Ovary (tissue), 10 donors: ENCODE measurements at regions of chr19 and their contacts with region 1.

Region 1: DNA sequence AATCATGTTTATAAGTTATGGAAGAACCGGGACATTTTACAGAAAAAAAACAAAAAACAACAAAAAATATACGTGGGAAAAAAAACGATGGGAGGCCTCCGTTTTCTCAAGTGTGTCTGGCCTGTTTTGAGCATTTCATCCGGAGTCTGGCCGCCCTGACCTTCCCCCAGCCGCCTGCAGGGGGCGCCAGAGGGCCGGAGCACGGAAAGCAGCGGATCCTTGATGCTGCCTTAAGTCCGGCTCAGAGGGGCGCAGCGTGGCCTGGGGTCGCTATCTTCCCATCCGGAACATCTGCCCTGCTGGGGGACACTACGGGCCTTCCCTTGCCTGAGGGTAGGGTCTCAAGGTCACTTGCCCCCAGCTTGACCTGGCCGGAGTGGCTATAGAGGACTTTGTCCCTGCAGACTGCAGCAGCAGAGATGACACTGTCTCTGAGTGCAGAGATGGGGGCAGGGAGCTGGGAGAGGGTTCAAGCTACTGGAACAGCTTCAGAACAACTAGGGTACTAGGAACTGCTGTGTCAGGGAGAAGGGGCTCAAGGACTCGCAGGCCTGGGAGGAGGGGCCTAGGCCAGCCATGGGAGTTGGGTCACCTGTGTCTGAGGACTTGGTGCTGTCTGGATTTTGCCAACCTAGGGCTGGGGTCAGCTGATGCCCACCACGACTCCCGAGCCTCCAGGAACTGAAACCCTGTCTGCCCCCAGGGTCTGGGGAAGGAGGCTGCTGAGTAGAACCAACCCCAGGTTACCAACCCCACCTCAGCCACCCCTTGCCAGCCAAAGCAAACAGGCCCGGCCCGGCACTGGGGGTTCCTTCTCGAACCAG is 1.8 kb upstream of the APOE start:
- DNase-seq: peak; percentile 68 to 92 (median 81)
- H3K4me3 ChIP-seq: no peak overlapping the region
- H3K27ac ChIP-seq: no peak overlapping the region
- H3K4me1 ChIP-seq: peaks cover 7% of the 10 kb centered on the region
- H3K27me3 ChIP-seq: no peaks in the 10 kb centered on the region
- CTCF ChIP-seq: peak; percentile 97 to 98 (median 98)
- EP300 ChIP-seq: no peak
- POLR2A ChIP-seq: no peak

Region 2: DNA sequence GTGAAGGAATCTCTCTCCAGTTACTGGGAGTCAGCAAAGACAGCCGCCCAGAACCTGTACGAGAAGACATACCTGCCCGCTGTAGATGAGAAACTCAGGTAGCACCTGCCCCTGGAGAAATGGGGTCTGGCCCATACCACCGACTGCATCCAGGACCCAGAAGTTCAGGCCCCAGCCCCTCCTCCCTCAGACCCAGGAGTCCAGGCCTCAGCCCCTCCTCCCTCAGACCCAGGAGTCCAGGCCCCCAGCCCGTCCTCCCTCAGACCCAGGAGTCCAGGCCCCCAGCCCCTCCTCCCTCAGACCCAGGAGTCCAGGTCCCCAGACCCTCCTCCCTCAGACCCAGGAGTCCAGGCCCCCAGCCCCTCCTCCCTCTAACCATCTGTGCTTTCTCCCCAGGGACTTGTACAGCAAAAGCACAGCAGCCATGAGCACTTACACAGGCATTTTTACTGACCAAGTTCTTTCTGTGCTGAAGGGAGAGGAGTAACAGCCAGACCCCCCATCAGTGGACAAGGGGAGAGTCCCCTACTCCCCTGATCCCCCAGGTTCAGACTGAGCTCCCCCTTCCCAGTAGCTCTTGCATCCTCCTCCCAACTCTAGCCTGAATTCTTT is 45.1 kb after region 1 on chr19:
- intact Hi-C with region 1: loop called (anchors 2 to 5 kb)
- DNase-seq: no peak
- H3K4me3 ChIP-seq: no peak overlapping the region
- H3K27ac ChIP-seq: no peak overlapping the region
- H3K4me1 ChIP-seq: peaks cover 2% of the 10 kb centered on the region
- H3K27me3 ChIP-seq: no peaks in the 10 kb centered on the region
- CTCF ChIP-seq: no peak
- EP300 ChIP-seq: no peak
- POLR2A ChIP-seq: no peak

Region 3: DNA sequence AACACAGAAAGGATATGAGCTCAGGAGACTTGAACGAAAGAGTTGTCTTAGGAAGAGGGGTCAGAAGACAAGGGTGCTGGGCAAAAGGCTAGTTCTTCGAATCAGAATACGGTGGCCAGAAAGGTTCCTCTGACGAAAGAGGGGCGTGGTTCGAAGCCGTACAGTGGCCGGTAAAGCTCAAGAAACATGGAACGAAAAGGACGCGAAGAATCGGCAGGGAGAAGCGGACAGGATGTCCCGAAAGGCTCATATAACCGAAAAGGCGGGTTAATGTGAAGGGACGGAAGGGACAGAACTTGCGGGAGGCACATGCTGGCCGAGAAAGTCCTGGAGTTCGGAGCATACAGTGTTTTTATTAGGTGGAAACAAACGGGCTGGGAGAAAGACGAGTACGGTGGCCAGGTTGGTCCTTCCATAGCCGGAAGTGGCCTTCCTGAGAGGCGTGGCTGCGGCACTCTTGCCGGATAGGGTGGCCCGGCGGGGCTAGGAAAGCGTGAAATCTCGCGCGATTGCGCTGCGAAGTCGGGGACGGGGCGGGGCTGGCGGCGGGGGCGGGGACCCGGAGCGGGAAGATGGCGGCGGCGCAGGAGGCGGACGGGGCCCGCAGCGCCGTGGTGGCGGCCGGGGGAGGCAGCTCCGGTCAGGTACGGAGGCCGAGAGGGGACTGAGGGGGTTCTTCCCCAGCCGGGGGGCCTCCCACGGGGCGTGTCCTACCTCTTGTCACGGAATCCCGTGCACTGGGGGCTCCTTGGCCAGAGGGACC is 51.2 kb after region 1 on chr19 and contains the start of gene CLPTM1:
- intact Hi-C with region 1: loop called in 3 of 4 experiments (anchors 2 to 5 kb)
- DNase-seq: peak; percentile 96 to 98 (median 97)
- H3K4me3 ChIP-seq: peak within 1 kb of the TSS; percentile 65
- H3K27ac ChIP-seq: peak within 1 kb of the TSS; percentile 81 to 85
- H3K4me1 ChIP-seq: peaks cover 13% of the 10 kb centered on the region
- H3K27me3 ChIP-seq: no peaks in the 10 kb centered on the region
- CTCF ChIP-seq: peak in 2 of 3 donors; percentile 47 to 57
- EP300 ChIP-seq: no peak
- POLR2A ChIP-seq: peak; percentile 77
- total RNA-seq, gene CLPTM1: 36.4 to 103 (median 82.0) TPM

Region 4: GRCh38 chr19:44972802-44973201 is 69.0 kb after region 1 on chr19:
- intact Hi-C with region 1: no loop called
- DNase-seq: no peak
- H3K4me3 ChIP-seq: no peak overlapping the region
- H3K27ac ChIP-seq: no peak overlapping the region
- H3K4me1 ChIP-seq: no peaks in the 10 kb centered on the region
- H3K27me3 ChIP-seq: no peaks in the 10 kb centered on the region
- CTCF ChIP-seq: no peak
- EP300 ChIP-seq: no peak
- POLR2A ChIP-seq: no peak

Region 5: GRCh38 chr19:45059278-45059965 is 155.6 kb after region 1 on chr19:
- intact Hi-C with region 1: loop called in 2 of 4 experiments (anchors 5 to 10 kb)
- DNase-seq: peak; percentile 33 to 72 (median 64)
- H3K4me3 ChIP-seq: no peak overlapping the region
- H3K27ac ChIP-seq: no peak overlapping the region
- H3K4me1 ChIP-seq: no peaks in the 10 kb centered on the region
- H3K27me3 ChIP-seq: no peaks in the 10 kb centered on the region
- CTCF ChIP-seq: peak in 2 of 3 donors; percentile 37 to 65
- EP300 ChIP-seq: no peak
- POLR2A ChIP-seq: no peak